ENCODE measurements at regions of chr1 and their contacts with region 1.

Region 1: DNA sequence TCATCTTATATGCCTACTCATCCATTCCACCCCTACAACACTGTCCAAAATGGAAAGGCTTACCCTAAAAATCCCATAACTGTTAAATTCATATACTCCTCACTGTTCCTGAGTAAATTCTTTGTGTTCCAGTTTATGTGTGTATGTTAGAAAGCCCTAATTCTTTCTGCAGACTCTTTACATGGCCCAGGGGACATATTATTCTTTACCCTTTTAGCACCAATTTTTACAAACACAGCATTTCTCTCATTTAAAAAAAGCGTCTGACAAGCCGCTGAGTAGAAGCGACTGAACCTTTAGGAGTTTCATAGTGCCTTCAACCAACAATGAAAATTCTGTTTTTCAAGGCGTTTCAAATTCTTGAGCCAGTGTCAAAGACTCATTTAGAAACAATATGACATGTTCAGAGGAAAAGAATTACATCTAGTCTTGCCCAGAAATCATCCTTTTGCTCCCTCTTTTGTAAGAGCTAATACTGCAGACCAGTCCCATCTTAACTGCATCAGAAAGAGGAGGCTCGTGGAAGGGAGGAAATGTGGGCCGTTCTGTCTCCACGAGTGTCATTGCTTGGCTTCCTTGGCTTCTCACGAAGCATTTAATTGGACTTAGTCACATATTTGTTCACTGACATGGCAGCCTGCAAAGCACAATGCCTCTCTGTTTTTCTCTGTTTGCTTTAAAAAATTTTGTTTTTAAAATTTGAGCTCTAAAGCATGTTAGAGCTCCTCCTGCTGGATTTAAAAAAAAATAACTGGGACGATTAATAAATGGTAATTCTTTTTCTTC is 21.3 kb upstream of the C1orf105 start:
- DNase-seq: peak; percentile 35
- ATAC-seq: peak; percentile 53
- H3K4me3 Mint-ChIP-seq: peak overlapping the region; percentile 29
- H3K27ac Mint-ChIP-seq: peak overlapping the region; percentile 70
- H3K4me1 Mint-ChIP-seq: peaks cover 74% of the 10 kb centered on the region
- H3K27me3 Mint-ChIP-seq: no peaks in the 10 kb centered on the region

Region 2: DNA sequence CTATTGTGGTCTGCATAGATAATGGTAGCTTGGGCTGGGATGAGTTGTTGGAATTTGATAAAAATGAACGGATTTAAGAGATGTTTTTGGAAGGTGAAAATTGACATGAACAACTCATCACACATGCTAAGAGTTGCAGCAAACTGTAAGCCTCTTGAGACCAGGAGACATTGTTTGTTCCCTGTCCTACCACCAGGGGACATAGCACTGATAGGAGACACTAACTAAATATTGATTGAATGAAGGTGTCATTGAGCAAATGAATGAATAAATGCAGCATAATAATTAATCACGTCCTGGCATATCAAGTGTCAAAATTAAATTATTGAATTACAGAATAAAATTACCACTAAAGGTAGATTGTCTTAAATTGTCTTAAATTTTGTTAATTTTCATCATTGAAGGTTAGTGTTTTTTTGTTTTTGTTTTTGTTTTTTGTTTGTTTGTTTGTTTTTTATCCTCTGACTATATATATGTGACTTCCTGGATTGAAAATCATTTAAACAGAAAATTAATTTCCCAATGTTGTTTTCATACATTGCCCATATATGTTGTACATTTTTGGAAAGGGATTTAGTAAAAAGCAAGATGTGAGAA is 264.0 kb before region 1 on chr1:
- CTCF ChIA-PET with region 1: interaction called, 4 read pairs
- POLR2A ChIA-PET with region 1: no interaction called
- intact Hi-C with region 1: loop called (anchors 5 kb)
- DNase-seq: peak; percentile 25
- ATAC-seq: no peak
- H3K4me3 Mint-ChIP-seq: no peak overlapping the region
- H3K27ac Mint-ChIP-seq: no peak overlapping the region
- H3K4me1 Mint-ChIP-seq: peaks cover 19% of the 10 kb centered on the region
- H3K27me3 Mint-ChIP-seq: no peaks in the 10 kb centered on the region

Region 3: GRCh38 chr1:172269644-172270043 is 129.5 kb before region 1 on chr1:
- CTCF ChIA-PET with region 1: no interaction called
- POLR2A ChIA-PET with region 1: no interaction called
- intact Hi-C with region 1: loop called (anchors 1 to 5 kb)
- DNase-seq: peak; percentile 18
- ATAC-seq: peak; percentile 10
- H3K4me3 Mint-ChIP-seq: no peak overlapping the region
- H3K27ac Mint-ChIP-seq: peak overlapping the region; percentile 39
- H3K4me1 Mint-ChIP-seq: peaks cover 41% of the 10 kb centered on the region
- H3K27me3 Mint-ChIP-seq: no peaks in the 10 kb centered on the region

Region 4: GRCh38 chr1:172357753-172358385 is 41.3 kb before region 1 on chr1:
- CTCF ChIA-PET with region 1: interaction called, 16 read pairs
- POLR2A ChIA-PET with region 1: interaction called, 15 read pairs
- intact Hi-C with region 1: loop called (anchors 1 kb)
- DNase-seq: no peak
- ATAC-seq: peak; percentile 6
- H3K4me3 Mint-ChIP-seq: peak overlapping the region; percentile 39
- H3K27ac Mint-ChIP-seq: peak overlapping the region; percentile 34
- H3K4me1 Mint-ChIP-seq: peaks cover 62% of the 10 kb centered on the region
- H3K27me3 Mint-ChIP-seq: peaks cover 2% of the 10 kb centered on the region

Region 5: GRCh38 chr1:172417552-172417951 is 18.4 kb after region 1 on chr1:
- CTCF ChIA-PET with region 1: interaction called, 14 read pairs
- POLR2A ChIA-PET with region 1: no interaction called
- intact Hi-C with region 1: no loop called
- DNase-seq: no peak
- ATAC-seq: no peak
- H3K4me3 Mint-ChIP-seq: no peak overlapping the region
- H3K27ac Mint-ChIP-seq: no peak overlapping the region
- H3K4me1 Mint-ChIP-seq: peaks cover 11% of the 10 kb centered on the region
- H3K27me3 Mint-ChIP-seq: no peaks in the 10 kb centered on the region